Activated CD4-positive, alpha-beta memory T cell treated with anti-CD3 and anti-CD28 coated beads, Interleukin-2, amount 10 ng/mL, durations not matched to agents 7 days and 5 days (primary cell): ENCODE measurements at regions of chr5 and their contacts with region 1.

Region 1: GRCh38 chr5:14364576-14365472 is 216.8 kb upstream of the OTULINL start:
- DNase-seq: peak; percentile 24
- H3K4me3 Mint-ChIP-seq: no peak overlapping the region
- H3K27ac Mint-ChIP-seq: peak overlapping the region; percentile 59
- H3K4me1 Mint-ChIP-seq: peaks cover 51% of the 10 kb centered on the region
- H3K27me3 Mint-ChIP-seq: peaks cover 2% of the 10 kb centered on the region

Region 2: GRCh38 chr5:14081791-14082190 is 283.0 kb before region 1 on chr5:
- CTCF ChIA-PET with region 1: no interaction called
- POLR2A ChIA-PET with region 1: no interaction called
- DNase-seq: no peak
- H3K4me3 Mint-ChIP-seq: no peak overlapping the region
- H3K27ac Mint-ChIP-seq: no peak overlapping the region
- H3K4me1 Mint-ChIP-seq: no peaks in the 10 kb centered on the region
- H3K27me3 Mint-ChIP-seq: peaks cover 2% of the 10 kb centered on the region

Region 3: GRCh38 chr5:14399054-14399692 is 34.3 kb after region 1 on chr5:
- CTCF ChIA-PET with region 1: interaction called, 21 read pairs
- POLR2A ChIA-PET with region 1: no interaction called
- DNase-seq: no peak
- H3K4me3 Mint-ChIP-seq: no peak overlapping the region
- H3K27ac Mint-ChIP-seq: no peak overlapping the region
- H3K4me1 Mint-ChIP-seq: peaks cover 30% of the 10 kb centered on the region
- H3K27me3 Mint-ChIP-seq: peaks cover 16% of the 10 kb centered on the region

Region 4: GRCh38 chr5:14451871-14452270 is 87.0 kb after region 1 on chr5:
- CTCF ChIA-PET with region 1: no interaction called
- POLR2A ChIA-PET with region 1: no interaction called
- DNase-seq: no peak
- H3K4me3 Mint-ChIP-seq: no peak overlapping the region
- H3K27ac Mint-ChIP-seq: no peak overlapping the region
- H3K4me1 Mint-ChIP-seq: peaks cover 14% of the 10 kb centered on the region
- H3K27me3 Mint-ChIP-seq: peaks cover 5% of the 10 kb centered on the region

Region 5: DNA sequence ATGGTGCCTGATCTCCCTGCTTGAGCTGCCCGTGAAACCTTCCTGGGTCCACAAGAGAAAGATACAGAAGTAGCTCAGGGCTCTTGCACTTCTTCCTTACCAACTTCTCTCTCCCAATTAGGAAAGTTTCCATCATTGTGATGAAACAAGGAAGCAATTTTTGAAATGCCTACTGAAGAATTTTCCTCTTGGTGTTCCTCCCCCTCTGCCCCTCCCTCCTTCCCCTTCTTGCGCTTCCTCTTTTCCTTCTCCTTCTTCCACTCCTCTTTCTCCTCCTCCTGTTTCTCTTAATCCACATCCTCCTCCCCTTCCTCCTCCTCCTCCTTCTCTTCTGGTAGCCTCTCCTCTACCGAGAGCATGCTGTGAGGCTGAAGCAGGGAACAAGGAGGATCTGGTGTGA is 180.5 kb after region 1 on chr5:
- CTCF ChIA-PET with region 1: no interaction called
- POLR2A ChIA-PET with region 1: no interaction called
- DNase-seq: no peak
- H3K4me3 Mint-ChIP-seq: no peak overlapping the region
- H3K27ac Mint-ChIP-seq: no peak overlapping the region
- H3K4me1 Mint-ChIP-seq: no peaks in the 10 kb centered on the region
- H3K27me3 Mint-ChIP-seq: peaks cover 7% of the 10 kb centered on the region

Region 6: DNA sequence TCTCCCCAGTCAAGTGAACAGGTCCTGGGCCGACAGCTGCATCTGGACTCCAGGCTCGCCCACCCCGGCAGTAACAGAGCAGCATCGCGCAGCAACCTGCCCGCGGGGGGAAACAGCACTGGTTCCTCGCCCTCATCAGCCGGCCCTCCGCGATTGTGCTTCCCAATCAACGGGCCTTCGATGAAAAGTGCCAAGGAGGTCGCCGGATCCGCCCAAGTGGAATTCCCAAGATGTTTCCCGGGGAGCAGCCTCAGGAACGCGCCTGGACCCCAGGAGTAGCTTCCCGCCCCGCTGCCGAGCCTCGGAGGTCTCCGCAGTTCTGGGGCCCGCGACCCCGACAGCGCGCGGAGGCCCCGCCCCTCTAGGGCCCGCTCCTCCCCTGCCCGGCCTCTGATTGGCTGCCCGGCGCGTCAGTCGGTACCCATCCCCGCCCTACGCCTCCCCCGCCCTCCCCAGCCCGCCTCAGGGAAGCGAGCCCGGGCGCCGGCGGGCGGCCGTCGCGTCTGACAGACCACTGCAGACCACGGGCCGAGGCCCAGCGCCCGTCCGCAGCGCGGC is 216.6 kb after region 1 on chr5 and contains the start of gene OTULINL:
- CTCF ChIA-PET with region 1: interaction called, 5 read pairs
- POLR2A ChIA-PET with region 1: interaction called, 26 read pairs
- DNase-seq: peak; percentile 88
- H3K4me3 Mint-ChIP-seq: peak within 1 kb of the TSS; percentile 79
- H3K27ac Mint-ChIP-seq: peak within 1 kb of the TSS; percentile 73
- H3K4me1 Mint-ChIP-seq: peaks cover 31% of the 10 kb centered on the region
- H3K27me3 Mint-ChIP-seq: peaks cover 19% of the 10 kb centered on the region
- total RNA-seq, gene OTULINL: 31.1 to 34.6 TPM

Region 7: DNA sequence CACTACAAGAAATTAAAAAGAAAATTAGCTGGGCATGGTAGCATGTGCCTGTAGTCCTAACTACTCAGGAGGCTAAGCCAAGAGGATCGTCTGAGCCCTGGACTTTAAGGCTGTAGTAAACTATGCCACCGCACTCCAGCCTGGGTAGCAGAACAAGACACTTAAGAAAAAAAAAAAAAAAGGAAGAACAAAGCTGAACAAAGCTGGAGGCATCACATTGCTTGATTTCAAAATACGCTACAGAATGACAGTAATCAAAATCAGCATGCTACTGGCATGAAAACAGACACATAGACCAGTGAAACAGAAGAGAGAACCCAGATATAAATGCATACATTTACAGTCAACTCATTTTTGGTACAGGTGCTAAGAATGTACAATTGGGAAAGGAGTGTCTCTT is 285.2 kb after region 1 on chr5:
- CTCF ChIA-PET with region 1: interaction called, 214 read pairs
- POLR2A ChIA-PET with region 1: interaction called, 16 read pairs
- DNase-seq: no peak
- H3K4me3 Mint-ChIP-seq: no peak overlapping the region
- H3K27ac Mint-ChIP-seq: no peak overlapping the region
- H3K4me1 Mint-ChIP-seq: peaks cover 8% of the 10 kb centered on the region
- H3K27me3 Mint-ChIP-seq: peaks cover 36% of the 10 kb centered on the region

Region 8: DNA sequence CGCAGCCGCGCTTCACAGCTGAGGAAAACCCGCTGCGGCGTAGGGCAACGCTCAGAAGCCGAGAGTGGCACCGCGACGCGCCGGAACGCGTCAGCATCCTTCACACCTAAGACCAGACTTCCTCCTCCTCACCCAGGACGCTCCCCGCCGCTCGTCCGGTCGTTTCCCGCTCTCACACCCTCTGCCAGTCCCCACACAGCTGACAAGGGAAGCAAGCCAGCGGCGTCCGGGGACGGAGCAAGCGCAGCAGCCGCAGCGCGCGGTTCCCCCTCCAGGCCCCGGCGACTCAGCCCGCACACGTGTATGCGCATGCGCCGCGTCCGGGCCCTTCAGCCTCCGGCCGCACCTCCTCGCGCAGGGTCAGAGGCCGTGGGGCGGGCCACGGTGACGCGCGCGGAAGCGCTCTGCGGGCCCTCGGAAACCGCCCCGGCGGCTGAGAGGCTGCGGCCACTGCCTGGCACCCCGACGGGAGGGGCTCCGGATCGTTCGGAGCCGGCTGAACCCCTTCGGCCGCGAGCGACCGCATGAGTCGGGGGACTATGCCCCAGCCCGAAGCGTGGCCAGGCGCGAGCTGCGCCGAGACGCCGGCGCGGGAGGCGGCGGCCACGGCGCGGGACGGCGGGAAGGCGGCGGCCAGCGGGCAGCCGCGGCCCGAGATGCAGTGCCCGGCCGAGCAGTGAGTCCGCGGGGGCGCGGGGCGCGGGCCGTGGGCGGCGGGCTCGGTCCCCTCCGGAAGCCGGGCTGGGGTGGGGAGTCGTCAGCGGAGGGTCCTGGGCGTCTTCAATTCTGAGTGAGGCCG is 299.7 kb after region 1 on chr5 and contains the start of gene OTULIN:
- CTCF ChIA-PET with region 1: interaction called, 4 read pairs
- POLR2A ChIA-PET with region 1: interaction called, 14 read pairs
- DNase-seq: peak; percentile 93
- H3K4me3 Mint-ChIP-seq: peak within 1 kb of the TSS; percentile 88
- H3K27ac Mint-ChIP-seq: peak within 1 kb of the TSS; percentile 98
- H3K4me1 Mint-ChIP-seq: peaks cover 70% of the 10 kb centered on the region
- H3K27me3 Mint-ChIP-seq: no peaks in the 10 kb centered on the region
- total RNA-seq, gene OTULIN: 69.6 to 71.7 TPM